GM10248 (cell line): ENCODE measurements at regions of chr1 and their contacts with region 1.

Region 1: DNA sequence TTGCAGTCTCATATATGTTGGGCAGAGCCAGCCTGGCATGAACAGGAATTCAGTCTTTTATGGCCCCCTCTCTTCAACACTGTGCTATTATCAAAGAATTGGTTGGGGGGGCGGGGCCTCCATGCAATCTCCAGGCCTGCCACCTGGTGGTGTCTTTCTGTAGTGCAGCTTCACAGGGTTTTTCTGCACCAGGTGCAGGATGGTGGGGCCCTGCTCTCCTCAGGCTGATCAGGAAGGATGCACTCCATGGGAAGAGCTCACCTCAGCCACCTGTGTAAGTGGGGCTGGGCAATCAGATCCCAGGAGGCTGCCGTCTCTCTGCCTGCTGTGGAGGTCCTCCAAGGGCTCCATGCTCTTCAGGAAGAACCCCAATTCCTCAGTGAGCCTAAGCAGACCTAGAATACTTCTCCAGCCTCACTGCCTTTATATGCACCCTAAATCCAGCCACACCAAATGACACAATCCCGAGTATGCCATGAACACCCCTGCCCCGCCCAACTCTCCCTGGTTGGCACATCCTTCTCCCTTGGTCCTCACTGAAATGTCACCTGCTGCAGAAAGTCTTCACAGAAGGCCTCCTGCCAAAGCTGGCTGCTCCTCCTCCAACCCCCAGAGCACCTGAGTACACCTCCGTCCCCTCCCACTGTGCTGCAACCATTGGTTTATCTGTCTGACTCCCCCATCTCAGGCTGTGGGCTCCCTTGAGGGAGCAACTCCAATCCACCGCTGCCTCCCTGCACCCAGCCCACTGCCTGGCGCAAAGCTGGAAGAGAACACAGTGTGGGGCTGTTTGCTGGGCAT is 16.5 kb downstream of the STK40 start:
- DNase-seq: peak; percentile 85
- CTCF ChIP-seq: peak; percentile 91

Region 2: DNA sequence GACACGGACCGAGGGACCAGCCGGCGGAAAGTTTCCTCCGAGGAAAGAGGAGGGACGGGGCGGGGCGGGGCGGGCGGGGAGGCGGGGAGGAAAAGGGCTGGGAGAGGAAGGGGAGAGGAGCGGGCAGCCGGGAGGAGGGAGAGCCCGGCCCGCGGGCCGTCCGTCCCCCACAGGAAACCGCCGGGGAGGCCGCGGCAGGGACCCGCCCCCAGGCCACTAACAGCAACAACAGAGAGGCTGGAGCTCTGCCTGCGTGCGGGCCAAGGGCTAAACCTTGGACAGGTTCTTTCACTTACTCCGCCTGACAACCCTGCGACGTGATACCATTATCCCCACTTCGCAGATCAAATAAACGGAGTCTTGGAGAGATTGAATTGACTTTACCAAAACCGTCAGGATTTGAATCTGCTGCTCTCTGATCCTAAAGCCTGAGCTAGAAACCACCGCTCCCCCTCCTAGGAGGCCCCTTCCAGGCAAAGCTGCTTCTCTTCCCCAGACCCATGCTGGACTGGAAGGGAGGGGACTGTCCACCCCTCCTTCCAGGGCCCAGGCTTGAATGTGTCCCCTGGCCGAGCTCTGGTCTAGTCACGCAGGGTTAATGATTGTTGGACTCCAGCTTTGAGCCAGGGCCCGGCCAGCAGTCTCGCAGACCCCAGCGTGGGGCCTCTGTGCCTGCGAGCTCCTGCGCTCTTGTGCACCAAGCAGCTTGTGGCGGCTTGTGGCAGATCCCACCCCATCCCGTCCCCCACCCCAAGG is 45.5 kb before region 1 on chr1 and contains the start of gene EVA1B:
- CTCF ChIA-PET with region 1: interaction called, 11 read pairs
- POLR2A ChIA-PET with region 1: no interaction called
- DNase-seq: peak; percentile 79
- CTCF ChIP-seq: no peak

Region 3: DNA sequence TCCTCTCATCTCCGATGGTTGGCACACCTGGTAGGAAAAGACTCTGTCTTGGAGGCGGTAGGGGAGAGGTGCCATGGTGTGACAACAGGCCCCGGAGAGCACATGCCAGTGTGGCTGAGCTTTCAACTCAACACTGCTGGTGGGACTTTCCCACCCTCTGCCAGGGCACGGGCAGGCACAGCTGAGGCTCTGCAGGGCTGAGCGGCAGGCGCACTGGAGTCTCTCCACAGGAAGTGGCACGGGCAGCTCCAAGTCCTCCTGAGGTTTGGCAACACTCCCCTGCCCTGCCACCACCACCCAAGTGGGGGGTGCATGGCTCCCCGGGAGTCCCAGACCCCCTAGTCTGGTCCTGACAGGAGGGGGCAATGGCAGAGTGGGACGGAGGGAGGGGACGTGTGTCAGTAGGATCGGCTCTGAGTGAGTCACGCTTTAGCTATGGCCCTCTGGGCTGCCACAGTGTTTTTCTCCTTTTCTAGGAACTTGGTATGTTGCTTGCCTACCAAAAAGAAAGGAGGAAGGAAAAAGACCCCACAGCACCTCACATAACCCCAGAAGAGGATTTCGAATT is 18.5 kb before region 1 on chr1:
- CTCF ChIA-PET with region 1: interaction called, 63 read pairs
- POLR2A ChIA-PET with region 1: no interaction called
- DNase-seq: no peak
- CTCF ChIP-seq: no peak